ENCODE measurements at regions of chr4 and their contacts with region 1.

Region 1: GRCh38 chr4:138576684-138577083 is 334.5 kb upstream of the SLC7A11 start:
- DNase-seq: no peak
- H3K4me3 ChIP-seq: no peak overlapping the region
- H3K27ac ChIP-seq: no peak overlapping the region
- H3K4me1 ChIP-seq: peaks cover 0 to 5% (median 0%) of the 10 kb centered on the region in 4 experiments; a peak in 1 of 7 replicates
- H3K27me3 ChIP-seq: no peaks in the 10 kb centered on the region
- CTCF ChIP-seq: peak in 2 of 3 experiments; percentile 59 to 72; a peak in 3 of 4 replicates
- EP300 ChIP-seq: no peak
- POLR2A ChIP-seq: no peak
- RAD21 ChIP-seq: peak; percentile 89 to 90

Region 2: GRCh38 chr4:138414202-138414601 is 162.5 kb before region 1 on chr4:
- CTCF ChIA-PET with region 1: no interaction called
- POLR2A ChIA-PET with region 1: no interaction called
- DNase-seq: no peak
- H3K4me3 ChIP-seq: no peak overlapping the region
- H3K27ac ChIP-seq: no peak overlapping the region
- H3K4me1 ChIP-seq: no peaks in the 10 kb centered on the region
- H3K27me3 ChIP-seq: no peaks in the 10 kb centered on the region
- CTCF ChIP-seq: no peak
- EP300 ChIP-seq: no peak
- POLR2A ChIP-seq: no peak
- RAD21 ChIP-seq: no peak

Region 3: GRCh38 chr4:138562544-138562991 is 14.1 kb before region 1 on chr4:
- CTCF ChIA-PET with region 1: interaction called, 22 read pairs
- POLR2A ChIA-PET with region 1: no interaction called
- DNase-seq: no peak
- H3K4me3 ChIP-seq: no peak overlapping the region
- H3K27ac ChIP-seq: no peak overlapping the region
- H3K4me1 ChIP-seq: no peaks in the 10 kb centered on the region
- H3K27me3 ChIP-seq: no peaks in the 10 kb centered on the region
- CTCF ChIP-seq: no peak
- EP300 ChIP-seq: no peak
- POLR2A ChIP-seq: no peak
- RAD21 ChIP-seq: no peak

Region 4: DNA sequence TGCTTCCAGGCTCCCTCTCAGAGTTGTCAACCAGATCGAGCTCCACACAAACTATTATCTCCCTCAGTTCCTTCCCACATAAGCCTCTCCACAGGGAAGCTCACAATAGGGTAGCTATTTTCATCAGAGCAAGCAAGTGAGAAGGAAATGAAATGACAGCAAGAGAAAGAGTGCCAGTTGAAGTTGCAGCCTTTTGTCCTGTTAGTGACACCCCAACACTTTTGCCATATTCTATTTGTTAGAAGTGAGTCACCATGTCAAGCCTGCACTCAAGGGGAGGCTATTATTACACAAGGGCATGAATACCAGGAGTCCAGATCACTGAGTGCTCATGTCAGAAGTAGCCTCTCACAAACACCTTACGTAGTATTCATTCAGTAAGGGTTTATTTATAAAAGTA is 172.6 kb after region 1 on chr4:
- CTCF ChIA-PET with region 1: no interaction called
- POLR2A ChIA-PET with region 1: no interaction called
- DNase-seq: no peak
- H3K4me3 ChIP-seq: no peak overlapping the region
- H3K27ac ChIP-seq: no peak overlapping the region
- H3K4me1 ChIP-seq: no peaks in the 10 kb centered on the region
- H3K27me3 ChIP-seq: no peaks in the 10 kb centered on the region
- CTCF ChIP-seq: no peak
- EP300 ChIP-seq: no peak
- POLR2A ChIP-seq: no peak
- RAD21 ChIP-seq: no peak

Measured in H1 (cell line).